ENCODE measurements at regions of chr12 and their contacts with region 1.

Region 1: DNA sequence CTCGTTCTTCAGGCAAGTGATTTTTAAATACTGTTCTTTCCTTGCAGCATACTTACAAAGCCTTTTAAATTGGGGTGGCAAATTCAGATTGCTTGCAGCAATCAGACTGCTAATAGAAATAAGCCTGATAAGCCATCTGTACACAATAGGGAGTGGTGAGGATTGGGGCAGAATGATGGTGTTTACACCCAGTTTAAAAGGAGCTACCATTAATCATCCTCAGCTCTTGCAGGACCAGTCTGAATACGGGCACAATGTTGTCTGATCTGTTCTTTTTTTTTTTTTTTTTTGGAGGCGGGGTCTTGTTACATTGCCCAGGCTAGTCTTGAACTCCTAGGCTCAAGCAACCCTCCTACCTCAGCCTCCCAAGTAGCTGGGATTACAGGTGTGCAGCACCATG is 50.1 kb upstream of the REP15 start:
- DNase-seq: no peak
- H3K4me3 ChIP-seq: no peak overlapping the region
- H3K27ac ChIP-seq: no peak overlapping the region
- H3K4me1 ChIP-seq: peaks cover 5% of the 10 kb centered on the region; the same call in 1 of the 2 replicates
- H3K27me3 ChIP-seq: no peaks in the 10 kb centered on the region
- CTCF ChIP-seq: no peak

Region 2: DNA sequence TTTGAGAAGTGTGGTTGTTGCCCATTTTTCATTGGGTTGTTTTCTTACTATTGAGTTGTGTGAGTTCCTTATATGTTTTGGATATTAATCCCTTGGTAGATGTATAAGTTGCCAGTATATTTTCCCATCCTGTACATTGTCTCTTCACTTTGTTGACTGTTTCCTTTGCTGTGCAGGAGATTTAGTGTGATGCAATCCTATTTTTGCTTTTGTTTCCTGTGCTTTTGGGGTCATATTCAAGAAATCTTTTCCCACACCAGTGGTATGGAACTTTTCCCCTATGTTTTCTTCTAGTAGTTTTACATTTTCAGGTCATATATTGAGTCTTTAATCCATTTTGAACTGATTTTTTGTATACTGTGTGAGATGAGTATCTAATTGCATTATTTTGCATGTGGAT is 233.6 kb after region 1 on chr12:
- CTCF ChIA-PET with region 1: interaction called, 25 read pairs
- POLR2A ChIA-PET with region 1: no interaction called
- intact Hi-C with region 1: no loop called
- DNase-seq: no peak
- H3K4me3 ChIP-seq: no peak overlapping the region
- H3K27ac ChIP-seq: no peak overlapping the region
- H3K4me1 ChIP-seq: no peaks in the 10 kb centered on the region
- H3K27me3 ChIP-seq: no peaks in the 10 kb centered on the region
- CTCF ChIP-seq: no peak

Measured in PC-9 (cell line).